Mammary epithelial cell (primary cell): ENCODE measurements at regions of chr2 and their contacts with region 1.

Region 1: GRCh38 chr2:73931531-73932500 is 5.1 kb downstream of the DGUOK start:
- DNase-seq: peak; percentile 78
- H3K4me3 ChIP-seq: no peak overlapping the region
- H3K27ac ChIP-seq: peak overlapping the region; percentile 58
- H3K4me1 ChIP-seq: peaks cover 75% of the 10 kb centered on the region
- H3K27me3 ChIP-seq: no peaks in the 10 kb centered on the region
- CTCF ChIP-seq: no peak

Region 2: GRCh38 chr2:73851274-73851673 is 80.5 kb before region 1 on chr2:
- CTCF ChIA-PET with region 1: interaction called, 26 read pairs
- dilution Hi-C with region 1: no loop called
- in situ Hi-C with region 1: loop called in 1 of 2 experiments (anchors 10 kb)
- intact Hi-C with region 1: loop called (anchors 5 kb)
- DNase-seq: no peak
- H3K4me3 ChIP-seq: no peak overlapping the region
- H3K27ac ChIP-seq: no peak overlapping the region
- H3K4me1 ChIP-seq: peaks cover 21% of the 10 kb centered on the region
- H3K27me3 ChIP-seq: no peaks in the 10 kb centered on the region
- CTCF ChIP-seq: peak; percentile 52 to 62

Region 3: DNA sequence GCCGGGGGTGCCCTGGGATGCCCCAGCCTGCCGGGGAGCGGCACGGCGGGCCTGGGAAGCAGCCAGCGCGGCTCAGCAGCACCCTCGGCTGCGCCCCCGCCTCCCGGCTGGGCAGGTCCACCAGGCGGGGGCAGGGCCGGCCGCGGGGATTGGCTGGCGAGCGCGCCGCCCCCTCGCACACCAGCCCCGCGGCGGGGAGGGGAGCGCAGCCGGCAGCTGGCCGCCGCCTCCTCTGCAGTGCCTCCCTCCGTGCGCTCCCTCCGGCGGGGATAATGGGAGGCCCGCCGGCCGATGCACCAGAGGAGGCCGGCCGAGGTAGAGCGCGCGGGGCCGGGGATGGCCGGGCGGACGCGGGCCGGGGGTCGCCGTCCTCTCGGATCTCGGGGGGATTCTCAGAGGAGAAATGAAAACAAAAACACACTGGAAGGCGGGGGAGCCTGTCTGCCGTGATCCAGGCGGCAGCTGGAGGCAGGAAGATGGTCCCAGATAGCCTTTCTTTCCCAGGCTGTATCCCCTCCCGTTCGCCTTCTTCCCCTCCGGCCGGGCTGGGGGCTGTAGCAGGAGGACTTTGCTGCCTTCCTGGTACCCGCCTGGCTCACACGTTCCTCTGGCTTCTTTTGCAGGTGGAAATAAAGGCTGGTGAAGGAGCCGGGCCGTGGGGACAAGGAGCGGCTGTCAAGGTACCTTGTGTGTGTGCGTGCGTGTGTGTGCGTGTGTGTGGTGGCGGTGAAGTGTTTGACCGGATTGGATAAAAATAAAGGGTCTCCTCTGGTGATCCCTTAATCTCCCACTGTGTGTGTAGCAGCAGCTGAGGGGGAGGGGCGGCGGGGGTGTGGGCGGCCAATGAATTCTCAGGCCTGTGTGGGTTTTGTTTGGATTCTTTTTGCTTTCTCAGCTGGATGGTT is 70.9 kb after region 1 on chr2:
- CTCF ChIA-PET with region 1: interaction called, 21 read pairs
- dilution Hi-C with region 1: no loop called
- in situ Hi-C with region 1: no loop called
- intact Hi-C with region 1: loop called (anchors 5 kb)
- DNase-seq: peak; percentile 83
- H3K4me3 ChIP-seq: peak overlapping the region; percentile 43 to 60 (median 53)
- H3K27ac ChIP-seq: peak overlapping the region; percentile 42
- H3K4me1 ChIP-seq: peaks cover 29% of the 10 kb centered on the region
- H3K27me3 ChIP-seq: no peaks in the 10 kb centered on the region
- CTCF ChIP-seq: no peak

Region 4: GRCh38 chr2:74119912-74120825 is 188.4 kb after region 1 on chr2:
- CTCF ChIA-PET with region 1: interaction called, 10 read pairs
- dilution Hi-C with region 1: no loop called
- in situ Hi-C with region 1: no loop called
- intact Hi-C with region 1: no loop called
- DNase-seq: peak; percentile 83
- H3K4me3 ChIP-seq: peak overlapping the region; percentile 60 to 86 (median 68)
- H3K27ac ChIP-seq: peak overlapping the region; percentile 52
- H3K4me1 ChIP-seq: peaks cover 12% of the 10 kb centered on the region
- H3K27me3 ChIP-seq: no peaks in the 10 kb centered on the region
- CTCF ChIP-seq: peak; percentile 21 to 67

Region 5: GRCh38 chr2:74168739-74169138 is 236.9 kb after region 1 on chr2:
- CTCF ChIA-PET with region 1: no interaction called
- dilution Hi-C with region 1: no loop called
- in situ Hi-C with region 1: no loop called
- intact Hi-C with region 1: no loop called
- DNase-seq: no peak
- H3K4me3 ChIP-seq: no peak overlapping the region
- H3K27ac ChIP-seq: no peak overlapping the region
- H3K4me1 ChIP-seq: no peaks in the 10 kb centered on the region
- H3K27me3 ChIP-seq: no peaks in the 10 kb centered on the region
- CTCF ChIP-seq: no peak